ENCODE measurements at regions of chr2 and their contacts with region 1.

Region 1: DNA sequence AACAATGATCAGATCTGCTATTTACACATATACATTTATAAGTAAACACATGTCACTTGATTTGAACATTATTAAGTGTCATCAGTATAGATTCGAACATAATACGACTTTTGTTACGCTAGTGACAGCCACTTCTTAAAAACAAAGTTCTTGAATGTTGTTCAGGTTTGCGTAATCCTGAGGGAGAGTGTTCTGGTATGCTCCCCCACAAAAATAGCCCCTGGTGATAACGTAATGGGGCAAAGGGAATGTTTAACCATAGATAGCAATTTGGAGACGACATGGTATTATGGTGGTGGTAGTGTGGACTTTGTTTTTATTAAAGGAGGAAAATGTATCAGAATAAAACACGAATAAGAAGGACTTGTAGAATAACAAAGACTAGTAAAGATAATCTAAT is 90.6 kb downstream of the PLEKHM3 start:
- DNase-seq: no peak
- ATAC-seq: no peak
- H3K4me3 ChIP-seq: no peak overlapping the region
- H3K27ac ChIP-seq: no peak overlapping the region
- H3K4me1 ChIP-seq: no peaks in the 10 kb centered on the region; the same call in 1 of the 2 replicates
- H3K27me3 ChIP-seq: no peaks in the 10 kb centered on the region; the same call in 1 of the 2 replicates
- CTCF ChIP-seq: no peak

Region 2: GRCh38 chr2:207867056-207867455 is 67.7 kb before region 1 on chr2:
- CTCF ChIA-PET with region 1: no interaction called
- POLR2A ChIA-PET with region 1: no interaction called
- in situ Hi-C with region 1: no loop called
- intact Hi-C with region 1: no loop called
- DNase-seq: no peak
- ATAC-seq: no peak
- H3K4me3 ChIP-seq: no peak overlapping the region
- H3K27ac ChIP-seq: no peak overlapping the region
- H3K4me1 ChIP-seq: no peaks in the 10 kb centered on the region
- H3K27me3 ChIP-seq: no peaks in the 10 kb centered on the region
- CTCF ChIP-seq: no peak

Region 3: DNA sequence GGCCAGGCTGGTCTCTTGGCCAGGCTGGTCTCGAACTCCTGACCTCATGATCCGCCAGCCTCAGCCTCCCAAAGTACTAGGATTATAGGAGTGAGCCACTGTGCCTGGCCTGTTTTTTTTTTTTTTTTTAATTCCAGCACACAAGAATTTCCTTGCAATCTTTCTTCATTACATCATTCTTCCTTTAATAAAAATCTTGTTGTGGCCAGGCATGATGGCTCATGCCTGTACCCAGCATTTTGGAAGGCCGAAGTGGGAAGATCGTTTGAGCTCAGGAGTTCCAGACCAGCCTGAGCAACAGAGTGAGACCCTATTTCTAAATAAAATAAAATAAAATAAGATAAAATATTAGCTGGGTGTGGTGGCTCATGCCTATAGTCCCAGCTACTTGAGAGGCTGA is 112.0 kb after region 1 on chr2:
- CTCF ChIA-PET with region 1: no interaction called
- POLR2A ChIA-PET with region 1: interaction called, 20 read pairs
- in situ Hi-C with region 1: no loop called
- intact Hi-C with region 1: no loop called
- DNase-seq: no peak
- ATAC-seq: no peak
- H3K4me3 ChIP-seq: no peak overlapping the region
- H3K27ac ChIP-seq: no peak overlapping the region
- H3K4me1 ChIP-seq: no peaks in the 10 kb centered on the region
- H3K27me3 ChIP-seq: no peaks in the 10 kb centered on the region; the same call in 1 of the 2 replicates
- CTCF ChIP-seq: no peak

Region 4: GRCh38 chr2:208101716-208102631 is 167.3 kb after region 1 on chr2:
- CTCF ChIA-PET with region 1: no interaction called
- POLR2A ChIA-PET with region 1: no interaction called
- in situ Hi-C with region 1: no loop called
- intact Hi-C with region 1: no loop called
- DNase-seq: peak; percentile 43
- ATAC-seq: peak; percentile 90
- H3K4me3 ChIP-seq: no peak overlapping the region
- H3K27ac ChIP-seq: no peak overlapping the region
- H3K4me1 ChIP-seq: no peaks in the 10 kb centered on the region
- H3K27me3 ChIP-seq: no peaks in the 10 kb centered on the region; the same call in 1 of the 2 replicates
- CTCF ChIP-seq: peak; percentile 74; the same call in 1 of the 2 replicates